Activated CD4-positive, alpha-beta memory T cell treated with anti-CD3 and anti-CD28 coated beads for 36 hours (primary cell): ENCODE measurements at regions of chr3 and their contacts with region 1.

Region 1: DNA sequence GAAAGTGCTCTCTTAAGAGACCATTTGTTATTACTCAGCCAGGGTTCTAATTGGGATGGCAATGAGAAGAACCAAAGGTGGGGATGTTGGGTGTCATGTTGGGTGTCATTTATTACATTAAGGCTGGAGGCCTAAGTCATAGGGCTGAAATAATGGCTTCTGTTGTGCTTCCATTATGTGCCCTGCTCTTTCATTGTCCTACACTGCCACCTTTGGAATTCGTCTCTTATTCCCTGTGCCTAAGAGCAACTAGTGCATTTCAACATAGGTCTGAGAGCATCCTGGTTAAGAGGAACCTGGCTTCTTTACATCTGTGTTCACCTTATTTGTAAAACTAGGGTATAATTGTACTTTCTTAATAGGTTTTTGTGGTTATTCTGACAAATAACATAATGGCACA is 32.2 kb downstream of the RIOX2 start:
- DNase-seq: no peak
- H3K4me3 Mint-ChIP-seq: no peak overlapping the region
- H3K27ac Mint-ChIP-seq: no peak overlapping the region
- H3K4me1 Mint-ChIP-seq: peaks cover 21% of the 10 kb centered on the region
- H3K27me3 Mint-ChIP-seq: no peaks in the 10 kb centered on the region

Region 2: DNA sequence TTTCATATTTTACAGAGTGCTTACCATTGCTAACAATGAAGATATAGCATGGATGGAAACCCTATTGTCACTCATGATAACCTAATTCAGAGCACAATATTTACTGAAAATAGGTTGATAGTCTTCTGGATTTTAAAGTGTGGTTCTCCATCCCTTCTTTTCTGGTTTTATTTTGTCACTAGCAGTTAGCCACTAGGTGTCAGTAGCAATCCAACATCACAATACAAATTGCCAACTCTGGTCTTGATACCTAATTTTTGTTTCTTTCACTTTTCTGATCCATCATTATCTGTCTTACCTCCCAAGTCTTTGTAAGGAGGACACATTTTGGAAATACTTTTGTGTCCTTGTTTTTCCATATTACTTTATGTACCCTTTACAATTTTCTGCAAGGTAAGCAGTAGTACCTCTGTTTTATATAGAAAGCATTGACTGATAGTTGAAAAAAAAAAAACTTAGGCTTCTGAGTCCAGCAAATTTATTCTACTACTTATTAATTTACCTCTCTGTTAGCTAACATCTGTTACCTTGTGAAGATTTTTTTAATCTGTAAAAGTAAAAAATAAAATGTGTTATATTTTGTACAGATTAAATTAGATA is 146.5 kb before region 1 on chr3:
- CTCF ChIA-PET with region 1: no interaction called
- POLR2A ChIA-PET with region 1: no interaction called
- intact Hi-C with region 1: loop called (anchors 2 kb)
- DNase-seq: no peak
- H3K4me3 Mint-ChIP-seq: no peak overlapping the region
- H3K27ac Mint-ChIP-seq: no peak overlapping the region
- H3K4me1 Mint-ChIP-seq: no peaks in the 10 kb centered on the region
- H3K27me3 Mint-ChIP-seq: no peaks in the 10 kb centered on the region

Region 3: DNA sequence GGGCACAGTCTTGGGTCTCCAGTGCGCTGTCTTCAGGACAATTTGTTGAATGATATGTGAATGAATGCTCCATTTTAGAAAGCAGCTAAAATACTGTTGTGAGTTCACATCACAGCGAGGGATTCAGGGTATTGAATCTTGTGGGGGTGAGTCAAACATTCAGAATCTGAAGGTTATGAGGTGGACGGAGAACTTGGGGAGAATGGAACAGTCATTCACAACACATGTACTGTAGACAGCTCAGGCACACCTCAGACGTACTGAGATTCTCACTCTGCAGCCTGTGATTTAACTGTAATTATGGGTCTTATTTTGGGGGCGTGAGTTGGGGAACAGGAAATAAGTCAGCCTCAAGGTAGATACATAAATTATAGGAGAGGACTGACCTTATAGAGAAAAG is 104.3 kb before region 1 on chr3:
- CTCF ChIA-PET with region 1: no interaction called
- POLR2A ChIA-PET with region 1: no interaction called
- intact Hi-C with region 1: loop called (anchors 5 kb)
- DNase-seq: no peak
- H3K4me3 Mint-ChIP-seq: no peak overlapping the region
- H3K27ac Mint-ChIP-seq: no peak overlapping the region
- H3K4me1 Mint-ChIP-seq: peaks cover 3% of the 10 kb centered on the region
- H3K27me3 Mint-ChIP-seq: no peaks in the 10 kb centered on the region

Region 4: DNA sequence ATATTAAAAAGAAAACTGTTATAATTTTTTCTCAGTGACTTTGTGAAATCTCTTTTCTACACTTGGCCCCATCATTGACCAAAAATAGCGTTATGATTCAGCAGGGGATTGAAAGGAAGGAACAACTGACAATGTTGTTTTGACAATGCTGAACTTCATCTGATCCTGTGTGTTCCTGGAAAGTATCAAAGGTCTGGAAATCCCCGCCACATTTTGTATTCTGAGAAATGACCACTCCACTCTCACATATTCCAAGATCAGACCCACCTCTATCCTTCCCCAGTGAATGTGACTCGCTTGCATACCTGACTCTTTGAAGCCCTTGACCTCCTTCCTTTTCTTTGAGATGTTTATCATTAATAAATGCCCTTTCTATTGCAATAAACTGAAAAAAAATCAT is 41.9 kb after region 1 on chr3:
- CTCF ChIA-PET with region 1: no interaction called
- POLR2A ChIA-PET with region 1: no interaction called
- intact Hi-C with region 1: loop called (anchors 2 kb)
- DNase-seq: peak; percentile 28
- H3K4me3 Mint-ChIP-seq: no peak overlapping the region
- H3K27ac Mint-ChIP-seq: peak overlapping the region; percentile 11
- H3K4me1 Mint-ChIP-seq: peaks cover 18% of the 10 kb centered on the region
- H3K27me3 Mint-ChIP-seq: no peaks in the 10 kb centered on the region